HEK293 (cell line): ENCODE measurements at regions of chr1 and their contacts with region 1.

Region 1: GRCh38 chr1:225318706-225319575 is 108.9 kb downstream of the LBR start:
- H3K4me3 ChIP-seq: no peak overlapping the region
- H3K27ac ChIP-seq: no peak overlapping the region
- H3K4me1 ChIP-seq: no peaks in the 10 kb centered on the region
- CTCF ChIP-seq: peak; percentile 88

Region 2: GRCh38 chr1:225137981-225138380 is 181.0 kb before region 1 on chr1:
- CTCF ChIA-PET with region 1: no interaction called
- POLR2A ChIA-PET with region 1: no interaction called
- H3K4me3 ChIP-seq: no peak overlapping the region
- H3K27ac ChIP-seq: no peak overlapping the region
- H3K4me1 ChIP-seq: no peaks in the 10 kb centered on the region
- CTCF ChIP-seq: no peak

Region 3: GRCh38 chr1:225329041-225329440 is 10.1 kb after region 1 on chr1:
- CTCF ChIA-PET with region 1: interaction called, 71 read pairs
- POLR2A ChIA-PET with region 1: no interaction called
- H3K4me3 ChIP-seq: no peak overlapping the region
- H3K27ac ChIP-seq: no peak overlapping the region
- H3K4me1 ChIP-seq: no peaks in the 10 kb centered on the region
- CTCF ChIP-seq: no peak

Region 4: GRCh38 chr1:225343624-225344023 is 24.7 kb after region 1 on chr1:
- CTCF ChIA-PET with region 1: interaction called, 31 read pairs
- POLR2A ChIA-PET with region 1: no interaction called
- H3K4me3 ChIP-seq: no peak overlapping the region
- H3K27ac ChIP-seq: no peak overlapping the region
- H3K4me1 ChIP-seq: no peaks in the 10 kb centered on the region
- CTCF ChIP-seq: no peak

Region 5: DNA sequence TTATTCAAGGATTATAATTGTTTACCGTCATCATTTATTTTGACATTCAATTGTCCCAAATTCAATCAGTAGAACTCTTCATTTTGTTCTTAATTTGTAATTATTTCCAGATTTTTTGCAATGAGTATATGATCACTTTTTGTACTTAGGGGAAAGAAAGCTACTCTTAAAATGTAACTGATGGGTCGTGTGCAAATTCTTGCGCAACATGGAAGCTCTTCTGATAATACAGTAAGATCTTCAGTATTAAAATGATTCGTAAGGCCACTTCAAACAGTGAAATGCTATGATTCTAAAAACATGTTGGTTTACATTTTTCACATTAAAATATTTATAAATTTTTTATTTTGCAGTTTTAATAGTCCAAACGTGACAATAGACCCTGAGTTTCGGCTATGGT is 45.5 kb after region 1 on chr1:
- CTCF ChIA-PET with region 1: interaction called, 11 read pairs
- POLR2A ChIA-PET with region 1: no interaction called
- H3K4me3 ChIP-seq: no peak overlapping the region
- H3K27ac ChIP-seq: no peak overlapping the region
- H3K4me1 ChIP-seq: 0 out of 2 replicates have a peak, but pooled peaks cover 2% of the 10 kb centered on the region
- CTCF ChIP-seq: no peak

Region 6: DNA sequence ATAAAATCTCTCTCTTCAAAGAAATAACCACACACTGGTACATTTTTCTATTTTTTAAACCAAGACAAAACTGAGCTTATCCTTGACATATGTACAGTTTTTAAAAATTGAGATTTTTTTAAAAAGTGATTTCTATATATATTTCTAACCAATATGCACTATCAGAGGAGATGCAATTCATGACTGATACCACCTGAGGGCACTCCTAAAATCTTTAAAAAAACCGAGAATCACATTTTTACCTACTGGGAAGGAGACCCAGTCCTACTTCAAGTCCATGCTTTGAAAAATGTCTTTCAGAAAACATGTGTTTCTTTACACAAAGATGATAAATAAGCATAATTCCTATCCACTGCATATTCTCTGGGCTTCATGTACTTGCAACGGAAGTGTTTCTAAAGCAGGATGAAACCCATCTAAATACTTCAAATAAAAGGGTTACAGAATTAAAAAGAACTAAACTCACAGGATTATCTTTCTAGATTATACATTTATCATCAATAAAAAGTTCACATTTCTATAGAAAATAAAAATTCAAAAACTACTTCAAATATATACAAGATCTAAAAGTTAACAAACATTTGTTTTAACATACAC is 235.4 kb after region 1 on chr1:
- CTCF ChIA-PET with region 1: no interaction called
- POLR2A ChIA-PET with region 1: no interaction called
- H3K4me3 ChIP-seq: no peak overlapping the region
- H3K27ac ChIP-seq: no peak overlapping the region
- H3K4me1 ChIP-seq: no peaks in the 10 kb centered on the region
- CTCF ChIP-seq: 0 out of 2 replicates have a peak, but pooled peaks have one; percentile 33

Region 7: DNA sequence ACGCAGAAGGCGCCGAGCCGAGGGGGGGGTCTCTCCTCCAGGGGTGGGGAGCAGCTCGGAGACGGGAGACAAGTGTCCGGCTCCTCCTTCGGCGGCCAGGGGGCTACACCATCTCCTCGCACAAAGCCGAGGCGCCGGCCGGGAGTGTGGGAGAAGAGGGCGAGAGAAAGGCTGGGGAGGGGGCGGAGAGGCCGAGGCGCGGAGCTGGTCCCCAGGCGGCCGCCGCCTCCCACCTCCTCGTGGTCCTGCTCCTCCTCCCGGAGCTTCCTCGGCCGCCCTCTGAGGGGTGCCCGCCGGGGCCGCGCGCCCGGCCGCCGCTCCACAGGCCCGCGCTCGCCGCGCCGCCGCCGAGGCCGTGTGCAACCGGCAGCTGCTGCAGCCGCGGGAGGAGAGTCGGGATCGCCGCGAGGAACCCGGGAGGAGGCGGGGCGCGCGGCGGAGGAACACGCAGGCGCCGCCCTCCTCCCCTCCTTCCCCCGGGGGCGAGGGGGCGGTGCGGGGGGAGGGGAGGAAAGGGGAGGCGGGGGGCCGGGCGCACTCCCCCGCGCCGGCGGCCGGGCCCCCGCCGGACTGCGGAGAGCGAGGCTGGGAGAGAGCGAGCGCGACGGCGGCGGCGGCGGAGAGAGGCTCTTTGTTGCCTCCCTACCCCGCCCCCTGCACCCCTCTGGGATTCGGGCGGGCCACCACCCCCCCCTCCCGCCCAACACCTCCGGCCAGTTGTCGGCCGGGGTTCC is 334.0 kb after region 1 on chr1 and contains the start of gene ENAH:
- CTCF ChIA-PET with region 1: no interaction called
- POLR2A ChIA-PET with region 1: no interaction called
- H3K4me3 ChIP-seq: peak within 1 kb of the TSS; percentile 92
- H3K27ac ChIP-seq: peak within 1 kb of the TSS; percentile 100
- H3K4me1 ChIP-seq: peaks cover 59% of the 10 kb centered on the region
- CTCF ChIP-seq: peak; percentile 74

Region 8: DNA sequence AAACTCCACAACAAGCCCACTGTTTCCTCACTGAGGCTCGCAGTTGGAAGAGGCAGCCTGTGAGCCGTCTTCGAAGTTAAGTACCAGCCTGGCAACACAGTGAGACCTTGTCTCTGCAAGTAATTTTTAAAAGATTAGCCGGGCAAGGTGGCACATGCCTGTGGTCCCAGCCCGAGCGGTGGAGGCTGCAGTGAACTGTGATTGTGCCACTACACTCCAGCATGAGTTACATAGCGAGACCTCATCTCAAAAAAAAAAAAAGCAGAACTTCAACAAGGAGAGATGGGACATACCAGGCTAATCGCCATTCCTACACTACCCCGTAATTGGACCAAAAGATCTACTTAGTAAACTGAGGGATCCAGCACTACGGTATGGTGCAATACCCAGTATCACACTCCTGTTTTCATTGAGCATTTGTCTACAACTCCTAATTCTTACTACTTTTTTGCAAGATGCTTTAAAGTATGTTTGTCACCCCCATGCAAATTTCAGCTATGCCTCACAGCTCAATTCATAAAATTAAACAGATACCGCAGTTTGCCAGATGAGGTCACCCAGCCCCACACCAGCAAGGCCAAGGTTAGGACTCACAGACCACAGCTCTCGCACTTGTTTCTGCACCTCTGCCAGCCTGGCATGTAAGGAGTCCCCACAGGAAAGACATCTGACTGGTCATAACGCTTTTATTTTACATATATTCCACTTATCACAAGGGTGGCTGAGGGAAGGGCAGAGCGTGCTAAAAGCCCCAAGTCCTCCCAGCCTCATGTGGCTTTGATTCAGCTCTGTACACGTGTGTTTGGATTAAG is 659.2 kb after region 1 on chr1:
- CTCF ChIA-PET with region 1: interaction called, 12 read pairs
- POLR2A ChIA-PET with region 1: no interaction called
- H3K4me3 ChIP-seq: no peak overlapping the region
- H3K27ac ChIP-seq: no peak overlapping the region
- H3K4me1 ChIP-seq: no peaks in the 10 kb centered on the region
- CTCF ChIP-seq: no peak